HCT116 (cell line): ENCODE measurements at regions of chr17 and their contacts with region 1.

Region 1: DNA sequence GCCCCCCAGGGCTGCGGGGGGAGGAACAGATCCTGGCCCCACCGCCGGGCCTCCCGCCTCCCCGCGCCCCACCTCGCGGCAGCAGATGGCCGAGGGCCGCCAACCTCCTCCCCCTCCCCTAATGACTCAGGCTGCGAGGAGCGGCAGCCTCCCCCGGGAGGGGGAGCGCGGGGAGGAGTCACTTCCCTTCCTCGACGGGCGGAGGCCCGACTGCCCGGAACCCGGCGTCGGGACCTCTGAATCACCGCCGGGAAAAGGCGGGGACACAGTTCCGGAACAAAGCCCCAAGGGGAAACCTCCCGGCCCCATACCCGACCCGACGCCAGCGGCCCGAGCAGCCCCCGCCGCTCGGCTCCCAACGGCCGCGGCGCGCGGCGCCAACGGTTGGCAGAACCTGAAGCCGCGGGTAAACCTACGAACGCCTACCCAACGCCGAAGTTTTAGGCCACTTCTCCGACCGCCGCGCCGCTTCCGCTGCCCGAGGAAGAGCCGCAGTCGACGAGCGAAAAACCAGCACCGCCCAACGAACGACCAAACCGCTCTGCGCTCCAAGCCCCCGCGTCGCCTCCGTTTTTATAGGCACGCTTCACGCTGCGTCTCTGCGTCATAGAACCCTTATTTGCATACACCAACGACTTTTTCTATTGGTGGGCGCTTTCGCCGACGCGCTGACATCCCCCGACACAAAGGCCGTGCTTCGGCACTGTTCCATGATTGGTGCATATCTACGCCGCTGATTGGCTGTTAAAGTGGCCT is 5.2 kb upstream of the UNK start:
- DNase-seq: peak; percentile 100
- ATAC-seq: peak; percentile 75
- H3K4me3 ChIP-seq: peak overlapping the region; percentile 74 to 84
- H3K27ac ChIP-seq: peak overlapping the region; percentile 97
- H3K4me1 ChIP-seq: peaks cover 38 to 79% of the 10 kb centered on the region in 2 experiments
- H3K27me3 ChIP-seq: no peaks in the 10 kb centered on the region
- CTCF ChIP-seq: no peak; a peak in 1 of 6 replicates
- POLR2A ChIP-seq: peak; percentile 100
- RAD21 ChIP-seq: no peak

Region 2: GRCh38 chr17:75684924-75685323 is 94.5 kb before region 1 on chr17:
- CTCF ChIA-PET with region 1: interaction called, 4 read pairs
- POLR2A ChIA-PET with region 1: interaction called, 14 read pairs
- RAD21 ChIA-PET with region 1: no interaction called
- intact Hi-C with region 1: no loop called
- DNase-seq: no peak
- ATAC-seq: peak; percentile 70
- H3K4me3 ChIP-seq: peak overlapping the region in 1 of 2 experiments; percentile 45; a peak in 3 of 4 replicates
- H3K27ac ChIP-seq: peak overlapping the region; percentile 67
- H3K4me1 ChIP-seq: peaks cover 71 to 100% of the 10 kb centered on the region in 2 experiments
- H3K27me3 ChIP-seq: no peaks in the 10 kb centered on the region
- CTCF ChIP-seq: no peak
- POLR2A ChIP-seq: no peak
- RAD21 ChIP-seq: no peak

Region 3: DNA sequence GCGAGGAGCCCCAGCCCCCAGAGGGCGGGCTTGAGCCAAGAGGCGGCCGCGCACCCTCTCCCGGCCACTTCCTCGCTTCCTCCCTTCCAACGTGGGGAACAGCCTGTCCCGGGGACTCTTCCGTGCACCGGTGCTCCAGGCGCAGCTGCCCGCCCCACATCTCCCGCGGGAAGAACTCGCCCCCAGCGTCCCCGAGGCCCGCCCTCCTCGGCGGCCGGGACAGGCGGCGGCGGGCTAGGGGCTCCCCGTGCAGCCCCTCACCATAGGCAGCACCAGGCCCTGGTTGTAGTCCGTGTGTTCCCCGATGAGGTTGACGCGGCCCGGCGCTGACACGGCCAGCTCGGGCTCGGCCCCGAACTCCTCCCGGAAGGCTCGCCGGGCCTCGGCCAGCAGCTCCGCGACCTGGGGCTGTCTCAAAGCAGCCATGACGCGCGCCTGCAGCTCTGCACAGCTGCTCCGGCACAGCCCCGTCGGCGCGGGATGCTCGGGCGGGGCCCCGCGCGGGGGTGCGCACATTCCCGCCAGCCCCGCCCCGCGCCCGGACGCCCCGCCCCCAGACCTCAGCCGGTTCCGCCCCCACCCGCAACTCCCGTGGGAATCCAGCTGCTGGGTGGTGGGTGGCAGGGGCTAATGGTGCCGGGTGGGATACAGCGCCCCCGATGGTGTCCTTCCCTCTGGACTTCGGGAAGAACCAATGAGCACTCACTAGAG is 14.5 kb before region 1 on chr17 and contains the start of gene GALK1:
- CTCF ChIA-PET with region 1: interaction called, 23 read pairs
- POLR2A ChIA-PET with region 1: interaction called, 74 read pairs
- RAD21 ChIA-PET with region 1: interaction called, 3 to 4 read pairs
- intact Hi-C with region 1: no loop called
- DNase-seq: no peak
- ATAC-seq: peak; percentile 85
- H3K4me3 ChIP-seq: peak within 1 kb of the TSS; percentile 84 to 91
- H3K27ac ChIP-seq: peak within 1 kb of the TSS; percentile 78
- H3K4me1 ChIP-seq: peaks cover 13 to 29% of the 10 kb centered on the region in 2 experiments
- H3K27me3 ChIP-seq: no peaks in the 10 kb centered on the region
- CTCF ChIP-seq: peak in 2 of 3 experiments; percentile 65 to 94; a peak in 4 of 6 replicates
- POLR2A ChIP-seq: no peak
- RAD21 ChIP-seq: peak; percentile 86
- total RNA-seq, gene GALK1: 57.8 TPM

Region 4: DNA sequence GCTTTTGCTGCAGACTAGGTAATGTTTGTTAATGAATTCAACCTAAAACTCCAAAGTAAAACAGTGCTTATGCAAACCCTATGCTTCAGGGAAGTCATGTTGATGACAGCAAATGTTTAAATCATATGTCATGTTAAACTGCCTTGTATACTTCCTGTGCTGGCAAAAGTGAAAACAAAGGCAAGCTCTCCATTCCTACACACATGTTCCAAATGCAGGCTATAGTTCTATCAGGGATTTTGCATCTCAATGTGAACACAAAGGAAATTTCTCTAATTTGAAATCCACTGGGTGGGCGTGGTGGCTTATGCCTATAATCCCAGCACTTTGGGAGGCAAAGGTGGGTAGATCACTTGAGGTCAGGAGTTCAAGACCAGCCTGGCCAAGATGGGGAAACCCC is 24.5 kb after region 1 on chr17:
- CTCF ChIA-PET with region 1: no interaction called
- POLR2A ChIA-PET with region 1: interaction called, 12 read pairs
- RAD21 ChIA-PET with region 1: no interaction called
- intact Hi-C with region 1: no loop called
- DNase-seq: no peak
- ATAC-seq: no peak
- H3K4me3 ChIP-seq: no peak overlapping the region
- H3K27ac ChIP-seq: no peak overlapping the region
- H3K4me1 ChIP-seq: no peaks in the 10 kb centered on the region
- H3K27me3 ChIP-seq: no peaks in the 10 kb centered on the region
- CTCF ChIP-seq: no peak
- POLR2A ChIP-seq: no peak
- RAD21 ChIP-seq: no peak

Region 5: DNA sequence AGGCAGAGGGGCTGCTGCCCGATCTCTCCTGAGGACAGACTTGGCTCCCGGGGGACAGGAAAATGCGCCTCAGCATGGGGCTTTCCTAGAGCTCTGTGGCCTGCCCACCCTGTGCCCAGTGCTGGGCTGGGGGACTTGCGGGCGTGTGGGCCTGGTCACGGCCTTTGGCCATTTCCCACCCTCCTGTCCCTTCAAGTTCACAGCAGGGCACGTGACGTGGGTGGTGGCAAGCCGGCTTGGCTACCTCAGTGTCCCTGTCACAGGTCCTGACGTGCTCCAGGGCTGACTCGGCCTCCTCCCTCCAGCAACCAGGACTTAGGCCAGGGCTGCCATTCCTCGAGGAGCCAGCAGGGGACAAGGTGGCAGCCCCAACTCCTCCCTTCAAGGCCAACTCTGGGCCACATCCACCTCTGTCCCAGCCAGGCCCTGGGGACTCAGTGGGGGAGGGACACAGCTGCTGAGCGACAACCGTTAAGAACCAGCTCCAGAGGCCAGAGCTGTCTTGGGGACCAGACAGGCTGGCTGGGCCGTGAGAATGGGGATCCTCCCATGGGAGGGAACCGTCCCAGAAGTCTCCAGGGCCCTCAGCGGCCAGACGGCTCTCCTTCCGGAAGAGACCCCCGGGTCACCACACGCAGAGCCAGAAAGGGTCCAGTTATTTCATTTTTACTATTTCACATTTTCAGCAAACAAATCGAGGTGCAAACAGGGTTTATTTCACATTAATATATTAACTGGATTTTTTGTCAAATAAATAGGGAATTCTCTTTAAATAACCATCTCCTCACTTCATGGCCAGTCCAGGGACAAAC is 65.8 kb after region 1 on chr17:
- CTCF ChIA-PET with region 1: interaction called, 11 read pairs
- POLR2A ChIA-PET with region 1: interaction called, 26 read pairs
- RAD21 ChIA-PET with region 1: interaction called in 1 of 2 experiments, 4 read pairs
- intact Hi-C with region 1: loop called (anchors 2 kb)
- DNase-seq: peak; percentile 96
- ATAC-seq: peak; percentile 86
- H3K4me3 ChIP-seq: peak overlapping the region; percentile 46 to 57
- H3K27ac ChIP-seq: peak overlapping the region; percentile 88
- H3K4me1 ChIP-seq: peaks cover 33 to 63% of the 10 kb centered on the region in 2 experiments
- H3K27me3 ChIP-seq: no peaks in the 10 kb centered on the region
- CTCF ChIP-seq: peak in 2 of 3 experiments; percentile 96 to 98; a peak in 5 of 6 replicates
- POLR2A ChIP-seq: no peak
- RAD21 ChIP-seq: no peak

Region 6: DNA sequence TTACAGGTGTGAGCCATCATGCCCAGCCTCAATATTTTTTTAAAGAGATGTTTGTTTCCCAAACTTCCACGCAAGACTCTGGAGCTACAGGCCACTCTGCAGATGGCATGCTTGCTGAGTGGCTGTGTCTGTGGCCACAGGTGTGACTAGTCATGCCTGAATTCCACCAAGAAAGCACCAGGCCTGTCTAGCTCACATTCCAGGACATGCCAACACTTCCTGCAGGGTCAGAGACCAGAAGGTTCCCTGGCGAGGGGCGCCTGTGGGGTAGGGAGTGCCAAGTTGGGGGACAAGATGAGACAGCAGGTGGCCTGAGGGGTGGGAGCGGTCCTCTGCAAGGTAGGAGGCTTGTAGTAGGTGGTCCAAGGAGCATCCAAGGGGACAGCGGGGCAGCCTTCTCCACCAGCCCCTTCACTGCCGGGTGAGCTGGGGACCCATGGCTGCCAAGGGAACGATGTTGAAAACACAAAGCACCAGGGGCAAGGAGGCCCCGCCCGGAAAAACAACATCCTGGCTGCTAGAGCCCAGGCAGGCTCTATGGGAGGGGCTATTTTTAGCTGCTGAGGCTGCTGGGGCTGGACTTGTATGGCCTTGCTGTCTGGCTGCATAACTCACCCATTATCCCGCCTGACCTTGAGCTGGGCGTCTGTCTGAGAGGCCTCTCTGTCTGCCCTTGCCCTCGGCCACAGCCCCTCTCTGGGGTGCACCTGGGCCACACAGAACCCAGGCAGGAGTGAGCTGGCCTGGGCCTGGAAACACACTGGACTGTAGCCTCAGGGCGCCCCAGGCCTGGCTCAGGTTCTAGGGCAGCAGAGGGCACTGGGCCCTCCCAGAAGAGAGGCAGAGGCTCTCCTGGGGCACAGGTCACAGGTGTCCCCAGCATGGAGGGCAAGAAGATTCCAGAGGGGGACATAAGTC is 93.3 kb after region 1 on chr17:
- CTCF ChIA-PET with region 1: interaction called, 8 read pairs
- POLR2A ChIA-PET with region 1: interaction called, 27 read pairs
- RAD21 ChIA-PET with region 1: no interaction called
- intact Hi-C with region 1: loop called (anchors 5 kb)
- DNase-seq: no peak
- ATAC-seq: peak; percentile 47
- H3K4me3 ChIP-seq: peak overlapping the region in 1 of 2 experiments; percentile 24; a peak in 2 of 4 replicates
- H3K27ac ChIP-seq: peak overlapping the region; percentile 99
- H3K4me1 ChIP-seq: peaks cover 68 to 84% of the 10 kb centered on the region in 2 experiments
- H3K27me3 ChIP-seq: no peaks in the 10 kb centered on the region
- CTCF ChIP-seq: no peak
- POLR2A ChIP-seq: no peak
- RAD21 ChIP-seq: no peak